ENCODE measurements at regions of chr15 and their contacts with region 1.

Region 1: GRCh38 chr15:79923515-79924395 is 26.9 kb upstream of the MTHFS start:
- DNase-seq: peak; percentile 99

Region 2: DNA sequence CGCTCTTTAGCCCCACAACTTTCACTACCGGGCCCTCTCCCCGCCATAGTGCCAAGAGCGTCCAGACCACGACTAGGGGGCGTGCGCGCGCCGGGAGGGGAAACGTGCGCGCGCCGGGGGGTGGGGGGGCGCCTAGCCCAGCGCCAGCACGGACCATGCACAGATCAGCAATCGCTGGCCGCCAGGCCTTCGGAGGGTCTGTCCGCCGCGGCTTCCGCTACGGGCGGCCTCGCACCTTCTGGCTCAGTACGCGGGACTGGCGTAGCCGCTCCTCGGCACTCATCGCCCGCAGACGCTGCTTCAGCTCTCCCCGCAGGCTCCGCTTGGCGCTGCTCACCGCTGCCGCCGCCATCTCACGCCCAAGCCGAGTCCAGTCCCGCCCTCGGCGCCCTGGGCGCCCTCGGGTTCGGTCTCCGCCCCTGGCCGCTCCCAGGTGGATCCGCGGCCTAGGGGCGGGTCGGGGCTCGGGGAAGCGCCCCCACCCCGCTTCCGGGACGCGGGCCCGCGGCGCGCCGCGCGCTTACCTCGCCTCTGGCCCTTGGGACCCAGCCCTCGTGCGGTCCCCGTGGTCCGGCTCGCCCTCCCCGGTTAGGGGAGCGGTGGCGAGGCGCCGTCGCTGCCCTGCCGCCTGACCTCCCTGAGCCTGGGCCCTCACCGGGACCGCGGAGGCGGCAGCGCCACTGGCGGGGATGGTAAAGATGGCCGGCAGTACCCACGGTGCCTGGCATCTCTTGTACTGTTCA is 26.9 kb before region 1 on chr15 and contains the start of gene MTHFS:
- CTCF ChIA-PET with region 1: no interaction called
- POLR2A ChIA-PET with region 1: interaction called, 22 read pairs
- DNase-seq: peak; percentile 83

Region 3: GRCh38 chr15:79904271-79904670 is 19.5 kb before region 1 on chr15:
- CTCF ChIA-PET with region 1: no interaction called
- POLR2A ChIA-PET with region 1: interaction called, 22 read pairs
- DNase-seq: no peak

Region 4: GRCh38 chr15:79943820-79944219 is 20.1 kb after region 1 on chr15:
- CTCF ChIA-PET with region 1: interaction called, 3 read pairs
- POLR2A ChIA-PET with region 1: interaction called, 13 read pairs
- DNase-seq: no peak

Region 5: GRCh38 chr15:80058851-80059785 is 135.4 kb after region 1 on chr15 and contains the start of gene ZFAND6:
- CTCF ChIA-PET with region 1: no interaction called
- POLR2A ChIA-PET with region 1: interaction called, 15 read pairs
- DNase-seq: peak; percentile 96